PC-9 (cell line): ENCODE measurements at regions of chr7 and their contacts with region 1.

Region 1: DNA sequence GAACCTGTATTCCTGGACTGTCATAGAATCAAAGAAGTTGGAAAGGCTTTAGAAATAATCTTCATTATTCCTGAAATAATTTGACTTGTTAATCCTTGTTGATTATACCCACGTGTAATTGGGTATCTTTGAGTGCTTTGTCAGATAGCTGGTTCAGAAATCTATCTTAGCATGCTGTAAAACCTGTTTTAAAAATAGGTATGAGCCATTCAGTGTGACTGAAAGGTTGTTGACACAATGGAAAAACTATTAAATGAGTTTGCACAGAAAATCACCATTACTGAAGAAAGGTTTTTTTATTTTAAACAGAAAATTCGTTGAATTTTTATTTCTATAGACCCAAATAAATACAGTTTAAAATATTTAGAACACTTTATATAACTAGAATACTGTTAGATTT is 38.7 kb downstream of the PHTF2 start:
- DNase-seq: peak in 1 of 2 experiments; percentile 49
- H3K4me3 ChIP-seq: no peak overlapping the region
- H3K27ac ChIP-seq: peak overlapping the region; percentile 9; the same call in 1 of the 2 replicates
- H3K4me1 ChIP-seq: peaks cover 32% of the 10 kb centered on the region
- H3K27me3 ChIP-seq: no peaks in the 10 kb centered on the region
- CTCF ChIP-seq: no peak

Region 2: DNA sequence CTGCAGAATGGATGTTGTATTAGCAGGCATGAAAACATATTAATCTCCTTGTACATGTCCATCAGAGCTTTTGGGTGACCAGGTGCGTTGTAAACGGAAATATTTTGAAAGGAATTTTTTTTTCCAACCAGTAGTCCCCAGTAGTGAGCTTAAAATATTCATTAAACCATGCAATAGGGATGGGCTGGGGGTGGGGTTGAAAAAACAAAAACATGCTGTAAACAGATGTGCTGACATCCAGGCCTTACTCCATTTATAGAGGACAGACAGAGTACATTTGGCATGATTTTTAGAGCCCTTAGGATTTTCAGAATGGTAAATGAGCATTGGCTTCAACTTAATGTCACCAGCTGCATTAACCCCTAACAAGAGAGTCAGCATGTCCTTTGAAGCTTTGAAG is 250.0 kb before region 1 on chr7:
- CTCF ChIA-PET with region 1: no interaction called
- POLR2A ChIA-PET with region 1: no interaction called
- intact Hi-C with region 1: no loop called
- DNase-seq: no peak
- H3K4me3 ChIP-seq: no peak overlapping the region
- H3K27ac ChIP-seq: no peak overlapping the region
- H3K4me1 ChIP-seq: no peaks in the 10 kb centered on the region
- H3K27me3 ChIP-seq: no peaks in the 10 kb centered on the region
- CTCF ChIP-seq: no peak

Region 3: DNA sequence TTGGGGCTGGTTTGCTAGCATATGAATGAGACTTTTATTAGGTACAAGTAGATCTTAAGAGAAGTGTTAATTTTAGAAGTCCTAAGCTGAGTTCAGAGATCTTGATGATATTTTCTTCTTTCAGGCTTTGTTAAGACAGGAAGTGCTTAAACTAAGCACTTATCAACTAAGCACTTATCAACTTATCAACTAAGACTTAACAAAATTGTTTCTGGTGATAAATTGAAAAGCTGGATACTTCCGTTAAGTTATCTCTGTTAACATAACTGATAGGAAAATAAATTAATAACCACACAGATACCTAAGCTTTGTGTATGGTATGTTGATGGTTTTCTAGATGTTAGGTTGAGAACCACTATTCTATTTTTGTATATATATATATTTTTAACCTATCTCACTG is 75.0 kb after region 1 on chr7:
- CTCF ChIA-PET with region 1: no interaction called
- POLR2A ChIA-PET with region 1: interaction called, 15 read pairs
- intact Hi-C with region 1: no loop called
- DNase-seq: no peak
- H3K4me3 ChIP-seq: no peak overlapping the region
- H3K27ac ChIP-seq: no peak overlapping the region
- H3K4me1 ChIP-seq: no peaks in the 10 kb centered on the region
- H3K27me3 ChIP-seq: no peaks in the 10 kb centered on the region
- CTCF ChIP-seq: no peak

Region 4: GRCh38 chr7:78020136-78020873 is 183.0 kb after region 1 on chr7:
- CTCF ChIA-PET with region 1: no interaction called
- POLR2A ChIA-PET with region 1: no interaction called
- intact Hi-C with region 1: no loop called
- DNase-seq: peak; percentile 52 to 61
- H3K4me3 ChIP-seq: peak overlapping the region; percentile 80; the same call in 1 of the 2 replicates
- H3K27ac ChIP-seq: no peak overlapping the region
- H3K4me1 ChIP-seq: no peaks in the 10 kb centered on the region
- H3K27me3 ChIP-seq: peaks cover 21% of the 10 kb centered on the region; the same call in 1 of the 2 replicates
- CTCF ChIP-seq: peak; percentile 77

Region 5: GRCh38 chr7:78746301-78746700 is 909.0 kb after region 1 on chr7:
- CTCF ChIA-PET with region 1: interaction called, 5 read pairs
- POLR2A ChIA-PET with region 1: interaction called, 19 read pairs
- intact Hi-C with region 1: no loop called
- DNase-seq: no peak
- H3K4me3 ChIP-seq: no peak overlapping the region
- H3K27ac ChIP-seq: no peak overlapping the region
- H3K4me1 ChIP-seq: no peaks in the 10 kb centered on the region
- H3K27me3 ChIP-seq: no peaks in the 10 kb centered on the region
- CTCF ChIP-seq: no peak